AG04449 (cell line): ENCODE measurements at regions of chr1 and their contacts with region 1.

Region 1: GRCh38 chr1:20633190-20634064 is at the start of gene PINK1:
- DNase-seq: no peak
- H3K4me3 ChIP-seq: peak within 1 kb of the TSS; percentile 79
- CTCF ChIP-seq: peak; percentile 94

Region 2: DNA sequence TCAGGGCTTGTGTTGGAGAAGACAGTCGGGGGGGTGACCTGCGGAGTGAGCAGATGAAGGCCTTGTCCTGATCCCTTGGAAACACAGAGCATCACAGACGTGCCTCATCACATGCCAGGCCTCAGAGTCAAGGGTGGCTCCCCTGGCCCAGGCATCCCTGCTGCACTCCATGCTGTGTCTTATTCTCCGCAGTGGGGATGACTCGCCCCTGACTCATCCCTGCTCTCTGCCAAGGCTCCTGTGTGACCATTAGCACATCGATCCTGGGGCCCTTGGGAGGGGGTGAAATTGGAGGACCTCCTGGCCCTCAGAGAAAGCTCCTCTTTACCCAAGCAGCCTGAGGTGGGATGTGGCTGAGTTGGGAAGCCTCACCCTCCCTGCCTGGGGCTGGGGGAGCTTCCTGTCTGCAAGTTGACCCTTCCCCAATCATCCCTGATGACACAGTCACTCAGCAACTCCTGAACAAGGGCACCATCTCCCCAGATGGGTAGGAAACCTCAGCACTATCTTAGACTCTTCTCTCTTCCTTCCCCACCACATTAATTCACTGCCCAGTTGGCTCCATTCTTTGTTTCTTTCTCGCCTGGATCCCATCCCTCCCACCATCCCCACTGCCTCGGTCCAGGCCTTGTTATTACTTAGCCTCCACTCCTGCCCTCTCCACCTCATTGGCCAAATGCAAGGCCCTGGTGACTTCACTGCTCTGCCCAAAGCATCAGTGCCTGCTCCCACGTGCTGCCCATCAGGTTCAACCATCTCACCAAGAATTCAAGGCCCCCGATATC is 222.0 kb before region 1 on chr1:
- CTCF ChIA-PET with region 1: no interaction called
- POLR2A ChIA-PET with region 1: no interaction called
- DNase-seq: peak; percentile 71
- H3K4me3 ChIP-seq: no peak overlapping the region
- CTCF ChIP-seq: no peak

Region 3: DNA sequence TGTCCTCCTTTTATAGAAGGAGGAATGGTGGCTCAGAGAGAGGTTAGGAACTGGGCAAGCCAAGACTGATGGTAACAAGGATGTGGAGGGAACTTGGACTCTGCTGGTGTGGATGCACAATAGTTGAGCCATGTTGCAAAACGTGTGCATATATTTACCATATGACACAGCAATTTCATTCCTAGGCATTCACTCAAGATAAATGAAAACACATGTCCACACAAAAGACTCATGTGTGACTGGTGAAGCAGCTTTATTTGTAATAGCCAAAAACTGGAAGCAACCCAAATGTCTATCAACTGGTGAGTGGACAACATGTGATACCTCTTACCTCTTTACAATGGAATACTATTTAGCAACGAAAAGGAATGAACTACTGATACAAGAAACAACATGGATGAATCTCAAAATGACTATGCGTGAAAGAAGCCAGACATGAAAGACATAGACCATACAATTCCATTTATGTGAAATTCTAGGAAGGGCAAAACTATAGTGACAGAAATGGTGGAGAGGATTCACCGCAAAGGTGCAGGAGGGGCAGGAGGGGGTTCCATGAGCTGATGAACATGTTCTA is 183.6 kb before region 1 on chr1:
- CTCF ChIA-PET with region 1: no interaction called
- POLR2A ChIA-PET with region 1: no interaction called
- DNase-seq: no peak
- H3K4me3 ChIP-seq: no peak overlapping the region
- CTCF ChIP-seq: no peak

Region 4: DNA sequence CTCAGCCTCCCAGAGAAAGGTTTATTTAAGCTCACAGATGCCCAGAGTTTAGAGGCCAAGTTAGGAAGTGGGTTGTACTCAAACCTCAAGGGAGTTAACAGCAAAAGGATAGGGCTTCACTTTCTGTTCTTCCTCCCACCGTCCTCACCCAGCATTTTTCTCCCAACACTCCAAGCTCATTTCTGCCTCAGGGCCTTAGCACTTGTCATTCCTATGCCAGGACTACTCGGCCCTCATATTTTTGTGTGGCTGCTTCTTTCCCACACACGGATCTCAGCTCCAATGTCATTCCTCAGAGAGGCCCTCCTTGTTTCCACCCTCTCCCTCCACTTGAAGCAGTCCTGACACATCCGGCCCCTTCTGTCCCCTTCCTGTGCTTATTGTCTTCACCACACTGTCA is 68.2 kb before region 1 on chr1:
- CTCF ChIA-PET with region 1: interaction called, 186 read pairs
- POLR2A ChIA-PET with region 1: no interaction called
- DNase-seq: no peak
- H3K4me3 ChIP-seq: no peak overlapping the region
- CTCF ChIP-seq: no peak

Region 5: DNA sequence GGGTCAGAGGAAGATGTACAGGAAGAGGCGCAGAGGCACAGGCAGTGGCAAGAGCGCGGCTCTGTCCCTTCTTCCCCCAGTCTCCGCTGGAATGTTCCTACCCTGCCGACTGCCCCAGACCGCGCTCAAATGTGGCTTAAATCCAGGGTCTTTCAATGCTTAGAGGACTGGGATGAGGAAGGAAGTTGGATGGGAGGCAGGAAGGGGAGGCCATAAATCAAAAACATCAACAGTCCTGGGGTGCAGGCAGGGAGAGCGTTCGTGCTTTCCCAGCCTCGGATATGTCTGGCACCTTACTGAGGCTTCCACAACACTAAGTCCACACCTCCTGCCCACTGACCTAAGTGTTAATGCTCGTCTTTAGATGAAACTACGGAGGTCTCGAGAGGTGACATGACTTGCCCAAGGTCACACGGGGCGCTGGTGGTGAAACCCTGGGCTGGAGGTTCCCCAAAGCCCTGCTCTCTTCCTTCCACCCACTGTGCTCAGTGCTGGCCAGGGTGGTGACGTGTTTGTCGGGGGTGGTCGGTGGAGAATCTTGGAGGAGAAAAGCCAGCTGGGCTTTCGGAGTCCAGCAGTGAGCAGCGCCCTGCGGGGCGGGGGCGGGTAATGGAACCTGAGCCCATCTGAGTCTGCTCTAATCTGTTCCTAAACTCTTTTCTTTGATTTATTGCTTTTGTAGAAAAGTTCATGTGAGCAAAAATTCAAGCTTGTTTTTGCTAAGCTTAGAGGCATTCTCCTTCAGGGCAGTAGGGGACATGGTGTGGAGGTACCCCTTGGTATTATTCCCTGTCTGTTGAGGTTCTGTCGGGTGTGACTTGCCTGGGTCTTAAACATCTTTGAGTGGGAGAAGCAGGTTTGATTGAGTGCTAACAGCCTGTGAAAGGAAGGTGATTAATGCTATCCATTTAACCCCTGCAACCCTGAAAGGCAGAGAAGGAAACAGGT is 43.8 kb before region 1 on chr1:
- CTCF ChIA-PET with region 1: interaction called, 74 read pairs
- POLR2A ChIA-PET with region 1: interaction called, 3 read pairs
- DNase-seq: no peak
- H3K4me3 ChIP-seq: peak overlapping the region; percentile 40
- CTCF ChIP-seq: no peak

Region 6: GRCh38 chr1:20615946-20616846 is 17.2 kb before region 1 on chr1:
- CTCF ChIA-PET with region 1: interaction called, 224 read pairs
- POLR2A ChIA-PET with region 1: no interaction called
- DNase-seq: no peak
- H3K4me3 ChIP-seq: no peak overlapping the region
- CTCF ChIP-seq: no peak

Region 7: GRCh38 chr1:20661207-20662109 is 28.0 kb after region 1 on chr1 and contains the start of gene DDOST:
- CTCF ChIA-PET with region 1: interaction called, 60 read pairs
- POLR2A ChIA-PET with region 1: interaction called, 3 read pairs
- DNase-seq: peak; percentile 82
- H3K4me3 ChIP-seq: peak within 1 kb of the TSS; percentile 96
- CTCF ChIP-seq: peak; percentile 65